ENCODE measurements at regions of chr7 and their contacts with region 1.

Region 1: DNA sequence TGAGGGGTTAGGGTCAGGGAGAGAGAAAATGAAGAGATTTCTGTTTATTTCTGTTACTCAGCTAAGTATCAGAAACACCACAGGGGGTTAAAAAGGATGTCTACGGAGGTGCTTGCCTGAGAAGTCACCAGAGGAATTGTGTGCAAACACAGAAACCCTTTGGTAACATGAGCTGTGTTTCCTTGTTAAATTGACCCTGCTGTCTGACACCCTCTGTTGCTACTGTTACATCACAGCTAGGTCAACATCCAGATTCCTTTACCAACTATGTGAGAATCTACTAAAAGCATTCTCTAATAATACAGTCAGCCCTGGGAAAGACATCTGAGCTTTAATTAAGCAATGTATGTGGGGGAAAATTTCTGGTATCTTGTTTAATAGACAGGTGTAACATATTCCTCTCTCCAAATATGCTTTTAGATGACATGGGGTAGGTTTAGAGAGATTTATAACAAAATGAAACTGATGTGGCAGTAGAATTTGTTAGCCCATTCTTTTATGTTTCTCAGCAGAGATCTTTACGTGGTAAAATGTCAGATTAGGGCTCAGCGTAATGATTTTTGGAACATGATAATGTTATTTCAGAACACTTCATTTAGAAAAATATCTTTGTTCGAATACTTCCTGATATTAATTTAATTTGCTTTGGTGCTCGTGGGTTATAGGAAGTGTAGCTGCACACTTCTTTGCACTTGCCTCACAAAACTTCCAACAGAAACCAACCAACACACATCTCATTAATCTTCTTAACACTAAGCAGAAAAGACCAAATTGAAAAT is 168.0 kb upstream of the AHR start:
- DNase-seq: peak; percentile 49 to 100
- H3K4me3 ChIP-seq: peak overlapping the region; percentile 17; the same call in 1 of the 2 replicates
- H3K27ac ChIP-seq: peak overlapping the region; percentile 59
- H3K4me1 ChIP-seq: peaks cover 20% of the 10 kb centered on the region
- H3K27me3 ChIP-seq: no peaks in the 10 kb centered on the region
- CTCF ChIP-seq: no peak

Region 2: GRCh38 chr7:16989811-16990413 is 140.6 kb before region 1 on chr7:
- CTCF ChIA-PET with region 1: no interaction called
- POLR2A ChIA-PET with region 1: no interaction called
- intact Hi-C with region 1: loop called (anchors 1 kb)
- DNase-seq: peak; percentile 92 to 99
- H3K4me3 ChIP-seq: peak overlapping the region; percentile 32; the same call in 1 of the 2 replicates
- H3K27ac ChIP-seq: peak overlapping the region; percentile 84
- H3K4me1 ChIP-seq: peaks cover 40% of the 10 kb centered on the region
- H3K27me3 ChIP-seq: no peaks in the 10 kb centered on the region
- CTCF ChIP-seq: no peak

Region 3: DNA sequence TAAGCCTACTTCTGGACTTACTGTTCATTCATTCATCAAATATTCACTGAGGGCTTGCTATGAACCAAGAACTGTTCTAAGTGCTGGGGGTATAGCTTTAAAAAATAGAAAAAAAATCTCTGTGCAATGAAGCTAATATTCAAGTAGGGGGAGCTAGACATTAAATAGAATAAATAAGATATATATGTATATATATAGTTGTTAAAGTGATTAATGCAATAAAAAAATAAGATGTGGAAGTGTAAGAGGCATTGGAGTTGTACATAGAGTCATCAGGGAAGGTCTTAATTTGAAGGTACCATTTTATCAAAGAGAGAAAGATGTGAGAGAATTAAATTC is 67.5 kb before region 1 on chr7:
- CTCF ChIA-PET with region 1: no interaction called
- POLR2A ChIA-PET with region 1: interaction called, 11 read pairs
- intact Hi-C with region 1: no loop called
- DNase-seq: no peak
- H3K4me3 ChIP-seq: no peak overlapping the region
- H3K27ac ChIP-seq: no peak overlapping the region
- H3K4me1 ChIP-seq: no peaks in the 10 kb centered on the region
- H3K27me3 ChIP-seq: no peaks in the 10 kb centered on the region
- CTCF ChIP-seq: peak; percentile 73

Region 4: DNA sequence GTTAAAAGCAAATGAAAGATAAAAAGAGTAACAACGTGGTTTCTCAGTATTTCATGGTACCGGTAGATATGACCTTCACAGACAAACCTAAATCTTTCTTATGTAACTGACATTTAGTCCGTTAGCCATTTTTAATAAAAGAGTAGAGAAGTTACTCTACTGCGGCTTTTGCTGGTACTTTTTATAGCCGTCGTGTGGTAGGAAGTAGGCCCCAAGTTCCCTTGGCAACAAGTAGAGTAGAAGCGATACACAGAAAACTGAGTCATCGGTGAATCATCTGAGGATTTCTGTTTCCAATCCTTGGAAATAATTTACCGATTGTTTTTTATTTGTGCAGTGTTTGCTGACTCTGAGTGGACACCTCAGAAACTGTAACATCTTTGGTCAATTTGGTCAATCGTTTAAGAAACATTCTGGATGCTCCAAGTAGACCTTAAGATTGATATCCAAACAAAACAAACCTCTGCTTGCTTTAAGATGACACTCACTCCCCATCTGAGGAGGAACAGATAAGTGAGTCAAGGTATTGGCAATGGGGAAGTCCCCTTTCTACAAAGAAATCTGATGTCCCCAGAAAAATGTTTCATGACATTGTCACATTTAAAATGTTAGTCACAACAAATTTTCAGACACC is 104.0 kb after region 1 on chr7:
- CTCF ChIA-PET with region 1: no interaction called
- POLR2A ChIA-PET with region 1: no interaction called
- intact Hi-C with region 1: loop called (anchors 1 kb)
- DNase-seq: peak; percentile 56 to 97
- H3K4me3 ChIP-seq: peak overlapping the region; percentile 21; the same call in 1 of the 2 replicates
- H3K27ac ChIP-seq: peak overlapping the region; percentile 67
- H3K4me1 ChIP-seq: peaks cover 32% of the 10 kb centered on the region
- H3K27me3 ChIP-seq: no peaks in the 10 kb centered on the region
- CTCF ChIP-seq: no peak

Region 5: GRCh38 chr7:18288322-18289037 is 1158.0 kb after region 1 on chr7:
- CTCF ChIA-PET with region 1: no interaction called
- POLR2A ChIA-PET with region 1: no interaction called
- intact Hi-C with region 1: no loop called
- DNase-seq: no peak
- H3K4me3 ChIP-seq: no peak overlapping the region
- H3K27ac ChIP-seq: no peak overlapping the region
- H3K4me1 ChIP-seq: no peaks in the 10 kb centered on the region; the same call in 1 of the 2 replicates
- H3K27me3 ChIP-seq: no peaks in the 10 kb centered on the region
- CTCF ChIP-seq: no peak

Measured in PC-9 (cell line).